Naive thymus-derived CD4-positive, alpha-beta T cell (primary cell): ENCODE measurements at regions of chr1 and their contacts with region 1.

Region 1: DNA sequence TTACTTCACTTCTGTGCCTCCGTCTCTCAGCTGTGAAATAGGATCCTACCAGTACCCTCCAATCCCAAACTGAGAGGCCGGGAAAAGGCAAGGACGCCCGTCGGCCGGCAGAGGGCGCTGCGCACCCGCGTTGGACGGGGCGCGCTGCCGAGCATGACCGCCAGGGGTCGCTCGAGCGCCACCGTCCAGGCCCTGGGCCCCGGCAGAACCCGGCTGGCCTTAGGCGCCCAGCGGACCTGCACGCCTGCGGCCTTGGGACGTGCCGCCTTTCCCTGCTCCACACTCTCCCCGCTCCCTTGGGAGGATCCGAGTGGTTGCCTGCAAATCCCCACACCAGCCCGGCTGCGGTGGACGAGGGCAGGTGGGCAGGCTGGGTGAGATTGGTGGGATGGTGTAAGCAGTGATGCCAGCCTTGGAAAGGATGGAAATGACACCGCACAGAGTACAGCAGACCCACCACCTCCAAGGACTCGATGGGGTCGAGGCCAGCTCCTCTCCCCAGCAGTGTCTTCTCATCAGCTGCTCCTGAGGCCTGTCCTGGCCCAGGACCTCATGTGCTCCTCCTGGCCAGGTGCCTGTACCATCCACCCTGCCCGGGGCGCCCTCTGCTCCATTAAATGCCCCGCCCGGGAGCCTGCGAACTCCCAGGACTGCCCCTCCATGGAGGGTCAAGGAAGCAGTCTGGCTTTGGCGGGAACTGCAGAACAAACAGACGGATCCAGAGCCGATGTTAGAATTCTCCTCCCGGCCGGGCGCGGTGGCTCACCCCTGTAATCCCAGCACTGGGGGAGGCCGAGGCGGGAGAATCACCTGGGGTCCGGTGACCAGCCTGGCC is 47.4 kb upstream of the LBR start:
- DNase-seq: peak; percentile 36 to 88 (median 68)
- ATAC-seq: peak; percentile 96
- H3K4me3 ChIP-seq: no peak overlapping the region
- H3K4me3 Mint-ChIP-seq: peak overlapping the region in 5 of 10 donors; percentile 38 to 59 (median 56)
- H3K27ac ChIP-seq: no peak overlapping the region
- H3K27ac Mint-ChIP-seq: peak overlapping the region in 2 of 9 donors; percentile 38 to 87
- H3K4me1 ChIP-seq: peaks cover 11 to 37% of the 10 kb centered on the region in 2 donors
- H3K4me1 Mint-ChIP-seq: peaks cover 36 to 61% (median 52%) of the 10 kb centered on the region in 7 donors
- H3K27me3 ChIP-seq: no peaks in the 10 kb centered on the region
- H3K27me3 Mint-ChIP-seq: peaks cover 0 to 5% (median 0%) of the 10 kb centered on the region in 5 donors

Region 2: GRCh38 chr1:225652729-225653462 is 177.7 kb after region 1 on chr1 and contains the start of gene ENAH:
- CTCF ChIA-PET with region 1: no interaction called
- POLR2A ChIA-PET with region 1: no interaction called
- intact Hi-C with region 1: loop called in 1 of 2 experiments (anchors 10 kb)
- DNase-seq: peak in 7 of 9 donors; percentile 12 to 49 (median 21)
- ATAC-seq: peak; percentile 72
- H3K4me3 ChIP-seq: peak within 1 kb of the TSS; percentile 58
- H3K4me3 Mint-ChIP-seq: peak within 1 kb of the TSS; percentile 79 to 95 (median 88)
- H3K27ac ChIP-seq: no peak within 1 kb of the TSS
- H3K27ac Mint-ChIP-seq: peak within 1 kb of the TSS in 4 of 9 donors; percentile 16 to 78 (median 70)
- H3K4me1 ChIP-seq: peaks cover 5 to 12% of the 10 kb centered on the region in 2 donors
- H3K4me1 Mint-ChIP-seq: peaks cover 9 to 19% (median 16%) of the 10 kb centered on the region in 7 donors
- H3K27me3 ChIP-seq: peaks cover 0 to 12% of the 10 kb centered on the region in 2 donors
- H3K27me3 Mint-ChIP-seq: peaks cover 30 to 71% (median 40%) of the 10 kb centered on the region in 5 donors
- total RNA-seq, gene ENAH: 0.08 to 0.42 (median 0.16) TPM in 3 of 5 experiments, not detected in the others

Region 3: GRCh38 chr1:225845571-225846259 is 370.5 kb after region 1 on chr1:
- CTCF ChIA-PET with region 1: no interaction called
- POLR2A ChIA-PET with region 1: no interaction called
- intact Hi-C with region 1: loop called (anchors 2 to 5 kb)
- DNase-seq: peak in 4 of 9 donors; percentile 35 to 55 (median 46)
- ATAC-seq: peak; percentile 36
- H3K4me3 ChIP-seq: no peak overlapping the region
- H3K4me3 Mint-ChIP-seq: no peak overlapping the region
- H3K27ac ChIP-seq: no peak overlapping the region
- H3K27ac Mint-ChIP-seq: peak overlapping the region in 6 of 9 donors; percentile 12 to 98 (median 36)
- H3K4me1 ChIP-seq: peaks cover 37 to 38% of the 10 kb centered on the region in 2 donors
- H3K4me1 Mint-ChIP-seq: peaks cover 19 to 50% (median 43%) of the 10 kb centered on the region in 7 donors
- H3K27me3 ChIP-seq: no peaks in the 10 kb centered on the region
- H3K27me3 Mint-ChIP-seq: no peaks in the 10 kb centered on the region

Region 4: DNA sequence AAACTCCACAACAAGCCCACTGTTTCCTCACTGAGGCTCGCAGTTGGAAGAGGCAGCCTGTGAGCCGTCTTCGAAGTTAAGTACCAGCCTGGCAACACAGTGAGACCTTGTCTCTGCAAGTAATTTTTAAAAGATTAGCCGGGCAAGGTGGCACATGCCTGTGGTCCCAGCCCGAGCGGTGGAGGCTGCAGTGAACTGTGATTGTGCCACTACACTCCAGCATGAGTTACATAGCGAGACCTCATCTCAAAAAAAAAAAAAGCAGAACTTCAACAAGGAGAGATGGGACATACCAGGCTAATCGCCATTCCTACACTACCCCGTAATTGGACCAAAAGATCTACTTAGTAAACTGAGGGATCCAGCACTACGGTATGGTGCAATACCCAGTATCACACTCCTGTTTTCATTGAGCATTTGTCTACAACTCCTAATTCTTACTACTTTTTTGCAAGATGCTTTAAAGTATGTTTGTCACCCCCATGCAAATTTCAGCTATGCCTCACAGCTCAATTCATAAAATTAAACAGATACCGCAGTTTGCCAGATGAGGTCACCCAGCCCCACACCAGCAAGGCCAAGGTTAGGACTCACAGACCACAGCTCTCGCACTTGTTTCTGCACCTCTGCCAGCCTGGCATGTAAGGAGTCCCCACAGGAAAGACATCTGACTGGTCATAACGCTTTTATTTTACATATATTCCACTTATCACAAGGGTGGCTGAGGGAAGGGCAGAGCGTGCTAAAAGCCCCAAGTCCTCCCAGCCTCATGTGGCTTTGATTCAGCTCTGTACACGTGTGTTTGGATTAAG is 502.9 kb after region 1 on chr1:
- CTCF ChIA-PET with region 1: interaction called, 8 read pairs
- POLR2A ChIA-PET with region 1: no interaction called
- intact Hi-C with region 1: loop called (anchors 1 kb)
- DNase-seq: no peak
- ATAC-seq: peak; percentile 30
- H3K4me3 ChIP-seq: no peak overlapping the region
- H3K4me3 Mint-ChIP-seq: no peak overlapping the region
- H3K27ac ChIP-seq: no peak overlapping the region
- H3K27ac Mint-ChIP-seq: peak overlapping the region in 1 of 9 donors; percentile 20
- H3K4me1 ChIP-seq: no peaks in the 10 kb centered on the region
- H3K4me1 Mint-ChIP-seq: peaks cover 0 to 9% (median 6%) of the 10 kb centered on the region in 7 donors
- H3K27me3 ChIP-seq: no peaks in the 10 kb centered on the region
- H3K27me3 Mint-ChIP-seq: no peaks in the 10 kb centered on the region